GM12878 (cell line): ENCODE measurements at regions of chr6 and their contacts with region 1.

Region 1: DNA sequence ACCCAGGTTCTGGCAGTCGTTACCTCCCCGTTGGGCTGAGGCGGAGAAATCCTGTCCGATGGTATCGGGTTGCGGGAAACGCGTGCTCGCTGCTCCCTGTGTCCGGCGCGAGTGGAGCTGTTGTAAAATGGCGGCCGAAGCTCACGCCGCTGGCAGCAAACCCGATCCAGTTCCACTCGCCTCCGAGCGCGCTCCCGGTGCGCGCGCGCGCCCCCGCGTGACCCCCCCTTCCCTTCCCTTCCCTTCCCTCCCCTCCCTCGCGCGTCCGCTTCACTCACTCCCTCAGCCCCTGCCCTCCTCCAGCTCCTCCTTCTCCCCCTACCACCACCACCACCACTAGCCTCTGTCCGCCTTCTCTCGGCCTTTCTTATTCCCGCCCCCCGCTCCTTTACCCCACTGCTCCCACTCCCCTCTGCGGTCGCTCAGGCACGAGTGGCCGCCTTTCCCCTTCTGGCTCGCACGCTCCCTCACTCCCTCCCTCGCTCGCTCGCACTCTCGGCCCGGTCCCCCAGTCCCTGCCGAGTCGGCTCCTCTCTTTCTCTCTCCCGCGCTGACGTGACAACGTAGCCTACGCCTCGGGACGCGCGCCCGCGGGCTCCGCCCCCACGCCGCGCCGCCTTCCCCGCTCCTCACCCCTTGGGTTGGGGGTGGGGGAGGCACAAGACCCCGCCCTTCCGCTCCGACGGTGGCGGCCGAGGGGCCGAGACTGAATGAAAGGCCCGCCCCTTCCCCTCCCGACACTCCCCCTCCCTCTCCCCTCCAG is at the start of gene SYNCRIP:
- DNase-seq: peak; percentile 87
- ATAC-seq: peak; percentile 81
- H3K4me3 ChIP-seq: peak within 1 kb of the TSS; percentile 86
- H3K27ac ChIP-seq: peak within 1 kb of the TSS; percentile 98
- H3K4me1 ChIP-seq: no peaks in the 10 kb centered on the region
- H3K27me3 ChIP-seq: no peaks in the 10 kb centered on the region
- CTCF ChIP-seq: no peak
- EP300 ChIP-seq: no peak
- POLR2A ChIP-seq: peak; percentile 90
- RAD21 ChIP-seq: no peak
- polyA plus RNA-seq, gene SYNCRIP: 118 to 134 TPM

Region 2: DNA sequence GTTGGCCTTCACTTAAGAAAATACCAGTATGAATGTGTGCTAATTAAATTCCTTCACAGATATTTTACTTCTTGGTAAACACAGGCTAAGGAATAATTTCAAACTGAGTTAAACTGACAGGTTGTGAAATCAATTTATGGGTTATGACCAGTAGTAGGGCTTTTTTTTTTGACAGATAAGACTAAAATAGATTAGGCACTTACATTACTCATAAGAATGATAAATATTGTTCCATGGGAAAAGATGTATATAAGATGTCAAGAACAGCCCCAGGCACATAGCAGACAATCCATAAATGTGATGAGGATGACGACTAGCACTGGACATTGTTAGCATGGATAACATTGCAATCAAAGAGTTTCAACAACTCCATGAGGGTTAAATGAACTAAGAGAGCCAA is 170.2 kb before region 1 on chr6:
- CTCF ChIA-PET with region 1: no interaction called
- POLR2A ChIA-PET with region 1: no interaction called
- RAD21 ChIA-PET with region 1: no interaction called
- SMC1A ChIA-PET with region 1: no interaction called
- in situ Hi-C with region 1: no loop called
- intact Hi-C with region 1: no loop called
- DNase-seq: no peak
- ATAC-seq: no peak
- H3K4me3 ChIP-seq: no peak overlapping the region
- H3K27ac ChIP-seq: no peak overlapping the region
- H3K4me1 ChIP-seq: no peaks in the 10 kb centered on the region
- H3K27me3 ChIP-seq: no peaks in the 10 kb centered on the region
- CTCF ChIP-seq: no peak
- EP300 ChIP-seq: no peak
- POLR2A ChIP-seq: no peak
- RAD21 ChIP-seq: no peak

Region 3: DNA sequence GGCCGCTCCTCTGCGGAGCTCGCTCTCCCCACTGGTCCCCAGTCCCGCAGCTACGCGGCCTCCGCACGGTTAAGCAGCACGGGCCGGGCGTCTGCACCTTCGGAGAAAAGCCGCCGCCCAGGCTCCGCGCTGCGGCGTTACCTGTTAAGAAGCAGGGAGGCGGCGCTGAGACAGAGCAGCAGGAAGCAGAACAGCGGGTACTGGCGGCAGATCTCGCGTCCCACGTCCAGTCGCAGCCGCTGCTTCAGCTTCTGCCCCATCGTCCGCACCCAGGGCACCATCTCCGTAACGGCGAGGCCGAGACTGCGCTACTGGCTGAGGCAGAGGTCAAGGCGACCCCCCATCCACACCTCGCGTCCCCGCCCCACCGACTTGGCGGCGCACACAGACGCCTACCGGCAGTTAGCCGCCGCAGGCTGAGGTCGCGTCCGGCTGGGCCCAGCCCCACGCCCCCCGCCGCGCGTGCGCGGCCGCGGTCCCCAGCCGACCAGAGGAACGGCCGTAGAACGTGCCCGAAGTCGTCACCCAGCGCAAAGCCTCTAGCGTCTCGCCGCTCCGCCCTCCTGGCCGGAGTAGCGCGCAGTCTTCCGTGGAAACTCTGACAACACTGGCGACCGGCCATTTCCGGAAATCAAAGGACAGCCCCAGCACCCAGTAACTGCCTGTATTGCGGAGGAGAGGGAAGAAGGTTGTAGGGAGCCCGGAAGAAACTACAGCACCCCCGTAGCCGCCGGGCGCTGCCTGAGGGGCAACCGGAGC is 49.3 kb before region 1 on chr6 and contains the start of gene SNX14:
- CTCF ChIA-PET with region 1: interaction called, 3 read pairs
- POLR2A ChIA-PET with region 1: interaction called, 52 read pairs
- RAD21 ChIA-PET with region 1: interaction called, 11 read pairs
- SMC1A ChIA-PET with region 1: interaction called, 24 read pairs
- in situ Hi-C with region 1: no loop called
- intact Hi-C with region 1: loop called (anchors 2 kb)
- DNase-seq: peak; percentile 86
- ATAC-seq: peak; percentile 92
- H3K4me3 ChIP-seq: peak within 1 kb of the TSS; percentile 95
- H3K27ac ChIP-seq: peak within 1 kb of the TSS; percentile 67
- H3K4me1 ChIP-seq: no peaks in the 10 kb centered on the region
- H3K27me3 ChIP-seq: no peaks in the 10 kb centered on the region
- CTCF ChIP-seq: 0 out of 6 replicates have a peak, but pooled peaks of 1 of the 3 experiments have one; percentile 8
- EP300 ChIP-seq: 0 out of 4 replicates have a peak, but pooled peaks of 1 of the 2 experiments have one; percentile 8
- POLR2A ChIP-seq: peak; percentile 96
- RAD21 ChIP-seq: no peak
- polyA plus RNA-seq, gene SNX14: 34.2 to 50.9 TPM

Region 4: GRCh38 chr6:85620308-85620707 is 22.6 kb before region 1 on chr6:
- CTCF ChIA-PET with region 1: interaction called, 6 read pairs
- POLR2A ChIA-PET with region 1: interaction called, 3 read pairs
- RAD21 ChIA-PET with region 1: no interaction called
- SMC1A ChIA-PET with region 1: interaction called, 10 read pairs
- in situ Hi-C with region 1: no loop called
- intact Hi-C with region 1: no loop called
- DNase-seq: no peak
- ATAC-seq: no peak; the same call in 1 of the 3 replicates
- H3K4me3 ChIP-seq: no peak overlapping the region
- H3K27ac ChIP-seq: no peak overlapping the region
- H3K4me1 ChIP-seq: no peaks in the 10 kb centered on the region
- H3K27me3 ChIP-seq: no peaks in the 10 kb centered on the region
- CTCF ChIP-seq: no peak
- EP300 ChIP-seq: no peak
- POLR2A ChIP-seq: no peak
- RAD21 ChIP-seq: no peak

Region 5: DNA sequence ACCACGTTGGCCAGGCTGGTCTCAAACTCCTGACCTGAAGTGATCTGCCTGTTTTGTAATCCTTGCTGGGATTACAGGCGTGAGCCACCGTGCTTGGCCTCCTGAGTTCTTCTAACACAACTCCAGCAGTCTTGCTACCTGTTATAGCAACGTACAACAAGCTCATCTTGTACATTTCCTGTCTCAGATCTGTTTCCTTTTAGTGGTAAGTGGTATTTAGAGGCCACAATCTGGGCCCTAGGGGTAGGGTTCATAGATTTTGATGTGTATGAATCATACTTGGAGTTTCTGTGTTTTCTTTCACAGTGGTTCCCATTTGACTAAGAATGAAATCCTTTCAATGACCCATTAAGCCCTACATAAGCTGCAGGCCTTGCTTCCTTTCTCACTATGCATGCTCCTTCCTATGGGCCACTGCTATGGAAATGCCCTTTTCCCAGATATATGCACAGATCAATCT is 26.8 kb after region 1 on chr6:
- CTCF ChIA-PET with region 1: interaction called, 44 read pairs
- POLR2A ChIA-PET with region 1: interaction called, 192 read pairs
- RAD21 ChIA-PET with region 1: interaction called, 125 read pairs
- SMC1A ChIA-PET with region 1: interaction called, 103 read pairs
- in situ Hi-C with region 1: no loop called
- intact Hi-C with region 1: no loop called
- DNase-seq: peak; percentile 89
- ATAC-seq: peak; percentile 91
- H3K4me3 ChIP-seq: no peak overlapping the region
- H3K27ac ChIP-seq: peak overlapping the region; percentile 80
- H3K4me1 ChIP-seq: peaks cover 21% of the 10 kb centered on the region
- H3K27me3 ChIP-seq: no peaks in the 10 kb centered on the region
- CTCF ChIP-seq: no peak
- EP300 ChIP-seq: peak; percentile 71 to 93
- POLR2A ChIP-seq: peak; percentile 42; the same call in 1 of the 2 replicates
- RAD21 ChIP-seq: no peak

Region 6: DNA sequence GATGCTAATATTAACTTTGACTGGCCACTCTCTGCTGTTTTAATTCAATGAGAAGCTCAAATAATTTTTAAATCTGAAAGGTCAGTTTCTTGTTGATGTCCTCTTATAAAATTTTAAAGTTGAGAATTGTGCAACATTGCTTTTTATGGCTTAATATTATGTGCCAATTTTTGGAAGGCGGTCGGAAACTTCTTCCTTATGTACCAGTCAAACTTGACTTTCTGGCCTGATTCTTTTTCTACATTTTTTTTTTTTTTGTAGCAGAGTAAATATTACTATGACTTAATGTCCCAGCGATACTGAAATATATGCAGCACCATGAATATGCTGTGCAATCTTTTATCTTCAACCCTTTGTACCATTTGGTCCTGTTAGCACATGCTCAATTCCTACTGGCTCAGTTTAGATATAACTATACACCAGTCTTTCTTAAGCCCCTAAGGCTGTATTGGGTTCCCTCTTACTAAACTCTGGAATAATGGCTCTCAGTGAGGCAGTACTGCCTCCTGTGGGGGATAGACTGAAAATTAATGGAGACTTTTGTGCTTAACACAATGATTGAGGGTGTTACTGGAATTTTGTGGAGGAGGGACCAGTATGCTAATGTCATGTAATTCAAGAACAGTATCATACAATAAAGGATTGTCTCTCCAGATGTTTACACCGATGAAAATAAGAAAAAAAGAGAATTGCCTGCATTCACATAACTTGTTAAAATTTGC is 156.1 kb after region 1 on chr6:
- CTCF ChIA-PET with region 1: no interaction called
- POLR2A ChIA-PET with region 1: no interaction called
- RAD21 ChIA-PET with region 1: no interaction called
- SMC1A ChIA-PET with region 1: no interaction called
- in situ Hi-C with region 1: no loop called
- intact Hi-C with region 1: no loop called
- DNase-seq: no peak
- ATAC-seq: no peak
- H3K4me3 ChIP-seq: no peak overlapping the region
- H3K27ac ChIP-seq: no peak overlapping the region
- H3K4me1 ChIP-seq: no peaks in the 10 kb centered on the region
- H3K27me3 ChIP-seq: no peaks in the 10 kb centered on the region
- CTCF ChIP-seq: no peak
- EP300 ChIP-seq: no peak
- POLR2A ChIP-seq: no peak
- RAD21 ChIP-seq: no peak

Region 7: DNA sequence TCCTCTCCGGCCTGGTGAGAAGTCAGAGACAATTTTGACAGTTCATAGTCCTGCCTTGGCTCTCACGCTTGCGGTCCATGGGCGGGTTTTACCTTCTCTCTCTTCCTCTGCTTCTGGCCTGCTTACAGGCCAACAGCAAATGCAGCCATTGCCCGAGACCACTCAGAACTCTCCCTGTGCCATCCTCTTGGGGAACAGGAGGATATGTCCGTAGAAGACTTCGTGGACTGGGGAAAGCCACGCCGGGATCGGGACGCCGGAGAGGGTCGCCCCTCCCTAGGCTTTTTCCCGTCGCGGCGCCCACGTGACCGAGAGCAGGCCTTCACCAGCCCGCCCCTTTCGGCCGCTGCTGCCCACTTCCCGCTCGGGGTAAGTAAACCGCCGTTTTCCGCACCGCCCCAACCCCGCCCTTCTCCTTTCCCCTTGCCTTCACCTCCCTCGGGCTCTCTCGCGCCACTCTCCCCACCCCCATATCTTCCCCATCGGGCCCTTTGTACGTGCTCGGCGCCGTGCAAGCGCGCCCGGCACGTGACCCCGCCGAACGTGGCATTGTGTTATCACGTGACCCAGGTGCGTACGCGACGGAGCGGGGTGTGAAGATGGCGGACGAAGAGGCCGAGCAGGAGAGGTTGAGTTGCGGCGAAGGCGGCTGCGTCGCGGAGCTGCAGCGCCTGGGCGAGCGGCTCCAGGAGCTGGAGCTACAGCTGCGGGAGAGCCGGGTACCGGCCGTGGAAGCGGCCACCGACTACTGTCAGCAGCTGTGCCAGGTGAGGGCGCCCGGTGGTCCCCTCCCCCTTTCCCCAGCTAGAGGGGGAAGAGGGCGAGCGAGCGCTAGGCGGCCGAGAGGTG is 1512.3 kb after region 1 on chr6 and contains the start of gene ZNF292:
- CTCF ChIA-PET with region 1: no interaction called
- POLR2A ChIA-PET with region 1: no interaction called
- RAD21 ChIA-PET with region 1: no interaction called
- SMC1A ChIA-PET with region 1: no interaction called
- in situ Hi-C with region 1: loop called (anchors 25 kb)
- intact Hi-C with region 1: no loop called
- DNase-seq: peak; percentile 96
- ATAC-seq: peak; percentile 85
- H3K4me3 ChIP-seq: peak within 1 kb of the TSS; percentile 96
- H3K27ac ChIP-seq: peak within 1 kb of the TSS; percentile 92
- H3K4me1 ChIP-seq: peaks cover 3% of the 10 kb centered on the region; the same call in 1 of the 2 replicates
- H3K27me3 ChIP-seq: no peaks in the 10 kb centered on the region
- CTCF ChIP-seq: no peak; a peak in 2 of 6 replicates
- EP300 ChIP-seq: peak in 1 of 2 experiments; percentile 73; a peak in 2 of 4 replicates
- POLR2A ChIP-seq: peak; percentile 94
- RAD21 ChIP-seq: peak; percentile 25; the same call in 1 of the 2 replicates
- polyA plus RNA-seq, gene ZNF292: 11.1 to 20.9 TPM